K562 (cell line): ENCODE measurements at regions of chr20 and their contacts with region 1.

Region 1: DNA sequence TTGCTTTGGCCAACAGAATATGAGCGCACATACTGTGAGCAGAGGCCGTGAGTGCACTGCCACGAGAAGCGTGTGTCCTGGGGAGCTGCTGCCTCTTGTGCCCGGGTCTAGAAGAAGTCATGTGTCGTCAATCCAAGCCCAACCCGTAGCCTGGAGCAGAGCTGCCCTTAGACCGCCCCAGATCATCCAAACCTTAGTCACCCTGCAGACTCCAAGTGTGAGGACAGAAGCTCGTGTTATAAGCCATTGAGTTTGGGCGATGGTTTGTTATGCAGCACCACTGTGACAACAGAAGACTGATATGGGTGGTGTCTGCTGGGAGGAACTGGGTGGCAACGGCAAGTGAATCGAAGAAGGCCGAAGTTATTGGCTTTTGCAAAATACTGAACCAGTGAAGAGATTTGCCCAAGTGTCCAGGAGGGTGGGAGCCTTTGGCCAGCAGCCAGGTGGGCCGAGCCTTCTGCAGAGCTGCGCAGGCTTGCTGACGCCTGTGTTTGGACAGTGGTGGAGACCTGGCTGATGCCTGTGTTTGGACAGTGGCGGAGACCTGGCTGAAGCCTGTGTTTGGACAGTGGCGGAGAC is 101.3 kb upstream of the SULF2 start:
- DNase-seq: no peak
- ATAC-seq: no peak
- H3K4me3 ChIP-seq: no peak overlapping the region
- H3K27ac ChIP-seq: no peak overlapping the region
- H3K4me1 ChIP-seq: no peaks in the 10 kb centered on the region
- H3K27me3 ChIP-seq: peaks cover 0 to 24% of the 10 kb centered on the region in 2 experiments; a peak in 2 of 5 replicates
- CTCF ChIP-seq: no peak
- EP300 ChIP-seq: no peak
- POLR2A ChIP-seq: no peak
- RAD21 ChIP-seq: no peak

Region 2: DNA sequence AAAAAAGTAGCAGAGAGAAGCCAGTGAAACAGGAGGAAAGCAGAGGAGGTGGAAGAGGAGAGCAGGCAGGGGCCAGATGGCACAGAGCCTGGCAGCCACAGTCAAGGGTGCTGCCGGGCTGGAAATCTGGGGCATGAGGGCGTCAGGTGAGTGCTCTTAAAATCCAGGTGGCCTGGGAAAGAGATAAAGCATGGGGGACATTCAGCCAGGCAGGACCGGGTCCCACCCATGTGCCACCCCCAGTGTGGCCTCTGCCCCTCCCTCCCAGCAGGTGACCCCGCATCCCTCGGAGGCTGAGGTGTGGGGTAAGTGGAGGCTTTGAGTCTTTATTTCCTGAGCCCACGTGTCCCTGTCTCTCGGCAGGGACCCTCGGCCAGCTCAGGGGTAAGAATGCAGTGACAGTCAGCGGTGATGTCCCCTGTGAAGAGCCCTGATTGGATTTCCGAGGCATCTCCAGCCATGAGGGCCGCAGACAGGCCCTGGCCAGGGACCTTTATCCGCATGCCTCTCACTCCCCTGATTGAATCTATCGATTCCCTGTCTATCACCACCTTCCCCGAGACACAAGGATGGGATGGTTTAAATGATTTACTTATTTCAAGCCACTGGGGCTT is 67.4 kb before region 1 on chr20:
- CTCF ChIA-PET with region 1: no interaction called
- POLR2A ChIA-PET with region 1: no interaction called
- in situ Hi-C with region 1: loop called (anchors 5 kb)
- intact Hi-C with region 1: no loop called
- DNase-seq: no peak
- ATAC-seq: no peak
- H3K4me3 ChIP-seq: no peak overlapping the region
- H3K27ac ChIP-seq: no peak overlapping the region
- H3K4me1 ChIP-seq: no peaks in the 10 kb centered on the region
- H3K27me3 ChIP-seq: peaks cover 0 to 5% of the 10 kb centered on the region in 2 experiments; a peak in 2 of 5 replicates
- CTCF ChIP-seq: no peak
- EP300 ChIP-seq: no peak
- POLR2A ChIP-seq: no peak
- RAD21 ChIP-seq: no peak

Region 3: GRCh38 chr20:47847868-47848531 is 38.6 kb before region 1 on chr20:
- CTCF ChIA-PET with region 1: no interaction called
- POLR2A ChIA-PET with region 1: no interaction called
- in situ Hi-C with region 1: no loop called
- intact Hi-C with region 1: loop called (anchors 10 kb)
- DNase-seq: no peak
- ATAC-seq: no peak
- H3K4me3 ChIP-seq: no peak overlapping the region
- H3K27ac ChIP-seq: no peak overlapping the region
- H3K4me1 ChIP-seq: no peaks in the 10 kb centered on the region
- H3K27me3 ChIP-seq: peaks cover 0 to 27% of the 10 kb centered on the region in 2 experiments; a peak in 3 of 5 replicates
- CTCF ChIP-seq: no peak
- EP300 ChIP-seq: no peak
- POLR2A ChIP-seq: no peak
- RAD21 ChIP-seq: no peak

Region 4: DNA sequence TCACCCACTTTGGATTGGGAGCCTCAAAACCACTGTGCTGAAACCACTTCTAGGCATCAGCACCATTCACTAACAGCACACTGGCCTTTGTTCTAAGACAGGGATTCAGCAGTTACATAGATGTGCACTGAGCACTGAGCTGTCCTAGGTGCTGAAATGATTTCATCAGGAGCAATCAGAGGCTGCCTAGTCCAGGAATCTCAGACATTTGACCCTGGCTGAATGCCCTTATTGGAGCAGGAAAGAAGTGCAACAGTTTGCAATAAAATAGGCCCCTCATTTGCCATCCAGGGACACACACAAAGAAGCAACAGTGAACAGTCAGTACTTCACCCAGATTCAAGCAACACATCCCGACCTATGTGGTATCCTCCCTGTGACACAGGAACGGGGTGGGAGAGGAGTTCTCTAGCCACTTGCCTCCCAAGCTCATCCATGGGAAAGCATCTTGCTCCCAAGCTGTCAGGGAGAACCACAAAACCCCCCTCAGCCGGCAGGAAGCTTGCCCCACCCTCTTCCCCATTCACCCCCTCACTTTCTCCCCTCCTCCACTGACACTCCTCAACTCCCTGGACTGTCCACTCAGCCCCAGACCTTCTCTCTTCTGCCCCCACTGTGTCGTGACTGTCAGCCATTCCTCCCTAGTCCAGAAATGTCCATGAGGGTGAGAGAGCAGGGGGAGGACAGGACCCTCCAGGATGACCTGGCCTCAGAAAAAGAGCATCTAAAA is 636.8 kb after region 1 on chr20:
- CTCF ChIA-PET with region 1: no interaction called
- POLR2A ChIA-PET with region 1: no interaction called
- in situ Hi-C with region 1: loop called (anchors 5 kb)
- intact Hi-C with region 1: no loop called
- DNase-seq: peak in 2 of 4 experiments; percentile 32 to 46
- ATAC-seq: peak; percentile 84
- H3K4me3 ChIP-seq: no peak overlapping the region
- H3K27ac ChIP-seq: no peak overlapping the region
- H3K4me1 ChIP-seq: no peaks in the 10 kb centered on the region
- H3K27me3 ChIP-seq: peaks cover 0 to 11% of the 10 kb centered on the region in 2 experiments; a peak in 2 of 5 replicates
- CTCF ChIP-seq: no peak
- EP300 ChIP-seq: no peak
- POLR2A ChIP-seq: no peak
- RAD21 ChIP-seq: no peak